Calu3 (cell line): ENCODE measurements at regions of chr9 and their contacts with region 1.

Region 1: GRCh38 chr9:84397151-84397728 is 56.7 kb upstream of the SLC28A3 start:
- DNase-seq: peak; percentile 67
- H3K4me3 Mint-ChIP-seq: no peak overlapping the region
- H3K27ac Mint-ChIP-seq: no peak overlapping the region
- H3K4me1 Mint-ChIP-seq: no peaks in the 10 kb centered on the region
- H3K27me3 Mint-ChIP-seq: no peaks in the 10 kb centered on the region
- CTCF ChIP-seq: peak; percentile 72

Region 2: DNA sequence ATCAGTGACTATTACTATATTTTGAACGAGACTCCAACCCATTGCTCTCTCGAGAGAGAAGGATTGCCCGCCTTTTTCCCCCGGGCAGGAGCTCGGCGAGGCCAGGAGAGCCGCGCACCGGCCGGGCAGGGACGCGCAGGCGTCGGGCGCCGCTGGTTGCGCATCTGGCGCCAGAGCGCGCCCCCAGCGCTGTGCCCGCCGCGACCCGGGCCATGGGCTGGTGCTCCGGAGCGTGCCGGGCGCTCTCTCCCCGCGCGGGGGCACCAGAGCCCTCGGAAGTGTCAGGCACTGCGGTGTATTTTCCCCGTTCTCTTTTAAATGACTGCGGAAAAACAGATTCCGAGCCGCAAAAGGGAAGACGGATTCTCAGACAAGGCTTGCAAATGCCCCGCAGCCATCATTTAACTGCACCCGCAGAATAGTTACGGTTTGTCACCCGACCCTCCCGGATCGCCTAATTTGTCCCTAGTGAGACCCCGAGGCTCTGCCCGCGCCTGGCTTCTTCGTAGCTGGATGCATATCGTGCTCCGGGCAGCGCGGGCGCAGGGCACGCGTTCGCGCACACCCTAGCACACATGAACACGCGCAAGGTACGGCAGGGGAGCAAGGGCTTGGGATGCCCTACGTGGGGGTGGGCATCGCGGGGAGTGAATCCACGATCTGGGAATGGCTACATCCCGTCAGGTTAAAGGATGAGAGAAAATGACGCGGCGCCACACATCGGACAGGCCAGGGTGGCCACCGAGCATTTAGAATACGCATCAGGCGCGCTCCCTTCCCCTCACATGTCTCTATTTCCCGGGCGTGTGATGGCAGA is 271.2 kb after region 1 on chr9:
- CTCF ChIA-PET with region 1: interaction called, 3 read pairs
- intact Hi-C with region 1: loop called (anchors 5 kb)
- DNase-seq: peak; percentile 85
- H3K4me3 Mint-ChIP-seq: peak overlapping the region; percentile 90
- H3K27ac Mint-ChIP-seq: no peak overlapping the region
- H3K4me1 Mint-ChIP-seq: no peaks in the 10 kb centered on the region
- H3K27me3 Mint-ChIP-seq: no peaks in the 10 kb centered on the region
- CTCF ChIP-seq: no peak

Region 3: GRCh38 chr9:84781458-84781857 is 384.2 kb after region 1 on chr9:
- CTCF ChIA-PET with region 1: no interaction called
- intact Hi-C with region 1: loop called (anchors 5 kb)
- DNase-seq: peak; percentile 28
- H3K4me3 Mint-ChIP-seq: no peak overlapping the region
- H3K27ac Mint-ChIP-seq: no peak overlapping the region
- H3K4me1 Mint-ChIP-seq: no peaks in the 10 kb centered on the region
- H3K27me3 Mint-ChIP-seq: no peaks in the 10 kb centered on the region
- CTCF ChIP-seq: no peak

Region 4: DNA sequence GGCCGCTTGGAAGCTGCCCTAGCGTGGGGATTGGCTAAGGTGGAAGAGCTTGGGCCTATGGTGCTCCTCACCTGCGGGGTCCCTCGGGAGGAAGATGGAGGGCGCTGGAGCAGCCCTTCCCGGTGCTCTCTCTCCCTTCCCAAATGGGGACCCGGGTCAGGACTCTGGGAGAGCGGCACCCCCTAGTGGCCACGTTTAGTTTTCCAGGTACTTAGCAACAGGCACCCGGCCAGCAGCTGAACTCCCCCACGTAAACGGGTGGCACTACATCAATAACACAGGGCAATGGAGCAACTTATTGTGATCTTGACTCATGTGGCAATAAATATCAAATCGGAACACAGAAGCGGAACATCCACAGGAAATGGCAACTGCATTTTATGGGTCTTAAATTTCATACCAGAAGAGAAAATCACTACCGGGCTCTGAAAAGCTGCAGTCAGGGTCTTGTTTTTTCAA is 1027.9 kb after region 1 on chr9:
- CTCF ChIA-PET with region 1: no interaction called
- intact Hi-C with region 1: loop called (anchors 5 kb)
- DNase-seq: peak; percentile 78
- H3K4me3 Mint-ChIP-seq: peak overlapping the region; percentile 1
- H3K27ac Mint-ChIP-seq: no peak overlapping the region
- H3K4me1 Mint-ChIP-seq: peaks cover 17% of the 10 kb centered on the region
- H3K27me3 Mint-ChIP-seq: peaks cover 14% of the 10 kb centered on the region
- CTCF ChIP-seq: peak; percentile 56

Region 5: GRCh38 chr9:85610074-85610860 is 1213.0 kb after region 1 on chr9:
- CTCF ChIA-PET with region 1: interaction called, 17 read pairs
- intact Hi-C with region 1: loop called (anchors 2 kb)
- DNase-seq: peak; percentile 31
- H3K4me3 Mint-ChIP-seq: no peak overlapping the region
- H3K27ac Mint-ChIP-seq: peak overlapping the region; percentile 56
- H3K4me1 Mint-ChIP-seq: peaks cover 9% of the 10 kb centered on the region
- H3K27me3 Mint-ChIP-seq: no peaks in the 10 kb centered on the region
- CTCF ChIP-seq: peak; percentile 47